H1 (cell line): ENCODE measurements at regions of chr12 and their contacts with region 1.

Region 1: GRCh38 chr12:95918194-95918993 is 24.0 kb downstream of the CCDC38 start:
- DNase-seq: peak in 1 of 2 experiments; percentile 52
- H3K4me3 ChIP-seq: no peak overlapping the region
- H3K27ac ChIP-seq: no peak overlapping the region
- H3K4me1 ChIP-seq: no peaks in the 10 kb centered on the region
- H3K27me3 ChIP-seq: no peaks in the 10 kb centered on the region
- CTCF ChIP-seq: peak; percentile 59 to 98 (median 87)
- EP300 ChIP-seq: no peak
- POLR2A ChIP-seq: no peak
- RAD21 ChIP-seq: peak; percentile 92 to 94

Region 2: GRCh38 chr12:95516757-95517156 is 401.6 kb before region 1 on chr12:
- CTCF ChIA-PET with region 1: no interaction called
- POLR2A ChIA-PET with region 1: no interaction called
- DNase-seq: no peak
- H3K4me3 ChIP-seq: no peak overlapping the region
- H3K27ac ChIP-seq: no peak overlapping the region
- H3K4me1 ChIP-seq: no peaks in the 10 kb centered on the region
- H3K27me3 ChIP-seq: no peaks in the 10 kb centered on the region
- CTCF ChIP-seq: no peak
- EP300 ChIP-seq: no peak
- POLR2A ChIP-seq: no peak
- RAD21 ChIP-seq: no peak

Region 3: GRCh38 chr12:95942524-95943329 is 24.3 kb after region 1 on chr12 and contains the start of gene CCDC38:
- CTCF ChIA-PET with region 1: interaction called, 36 read pairs
- POLR2A ChIA-PET with region 1: no interaction called
- DNase-seq: peak in 1 of 2 experiments; percentile 84
- H3K4me3 ChIP-seq: peak within 1 kb of the TSS; percentile 59 to 95 (median 74)
- H3K27ac ChIP-seq: no peak within 1 kb of the TSS
- H3K4me1 ChIP-seq: peaks cover 0 to 4% (median under 1%) of the 10 kb centered on the region in 4 experiments; a peak in 3 of 7 replicates
- H3K27me3 ChIP-seq: peaks cover 0 to 11% (median 10%) of the 10 kb centered on the region in 4 experiments; a peak in 5 of 7 replicates
- CTCF ChIP-seq: no peak
- EP300 ChIP-seq: no peak
- POLR2A ChIP-seq: peak in 1 of 2 experiments; percentile 28; a peak in 1 of 3 replicates
- RAD21 ChIP-seq: no peak
- total RNA-seq, gene CCDC38: not detected in 2 replicates

Region 4: GRCh38 chr12:95951515-95951914 is 33.1 kb after region 1 on chr12:
- CTCF ChIA-PET with region 1: interaction called, 32 read pairs
- POLR2A ChIA-PET with region 1: no interaction called
- DNase-seq: no peak
- H3K4me3 ChIP-seq: no peak overlapping the region
- H3K27ac ChIP-seq: no peak overlapping the region
- H3K4me1 ChIP-seq: peaks cover 0 to 4% (median under 1%) of the 10 kb centered on the region in 4 experiments; a peak in 1 of 7 replicates
- H3K27me3 ChIP-seq: no peaks in the 10 kb centered on the region
- CTCF ChIP-seq: no peak
- EP300 ChIP-seq: no peak
- POLR2A ChIP-seq: no peak
- RAD21 ChIP-seq: no peak